PC-3 (cell line): ENCODE measurements at regions of chr3 and their contacts with region 1.

Region 1: GRCh38 chr3:113136071-113136470 is 75.3 kb upstream of the BOC start:
- DNase-seq: peak; percentile 60
- ATAC-seq: peak; percentile 46
- H3K4me3 ChIP-seq: no peak overlapping the region
- H3K27ac ChIP-seq: no peak overlapping the region
- H3K4me1 ChIP-seq: peaks cover 16% of the 10 kb centered on the region; the same call in 1 of the 2 replicates
- H3K27me3 ChIP-seq: no peaks in the 10 kb centered on the region
- CTCF ChIP-seq: peak; percentile 90

Region 2: DNA sequence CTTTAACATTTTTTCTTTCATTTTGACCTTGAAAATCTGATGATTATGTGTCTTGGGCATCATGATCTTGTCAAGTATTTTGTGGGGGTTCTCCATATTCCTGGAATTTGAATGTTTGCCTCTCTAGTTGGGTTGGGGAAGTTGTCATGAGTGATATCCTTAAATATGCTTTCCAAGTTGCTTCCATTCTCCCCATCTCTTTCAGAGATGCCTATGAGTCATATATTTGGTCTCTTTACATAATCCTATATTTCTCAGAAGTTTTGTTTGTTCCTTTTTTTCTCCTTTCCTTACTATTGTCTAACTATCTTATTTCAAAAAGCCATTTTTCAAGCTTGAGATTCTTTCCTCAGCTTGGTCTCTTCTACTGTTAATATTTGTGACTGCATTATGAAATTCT is 426.2 kb before region 1 on chr3:
- CTCF ChIA-PET with region 1: no interaction called
- POLR2A ChIA-PET with region 1: no interaction called
- intact Hi-C with region 1: no loop called
- DNase-seq: peak; percentile 36
- ATAC-seq: peak; percentile 74
- H3K4me3 ChIP-seq: no peak overlapping the region
- H3K27ac ChIP-seq: no peak overlapping the region
- H3K4me1 ChIP-seq: peaks cover 6% of the 10 kb centered on the region; the same call in 1 of the 2 replicates
- H3K27me3 ChIP-seq: no peaks in the 10 kb centered on the region
- CTCF ChIP-seq: no peak

Region 3: DNA sequence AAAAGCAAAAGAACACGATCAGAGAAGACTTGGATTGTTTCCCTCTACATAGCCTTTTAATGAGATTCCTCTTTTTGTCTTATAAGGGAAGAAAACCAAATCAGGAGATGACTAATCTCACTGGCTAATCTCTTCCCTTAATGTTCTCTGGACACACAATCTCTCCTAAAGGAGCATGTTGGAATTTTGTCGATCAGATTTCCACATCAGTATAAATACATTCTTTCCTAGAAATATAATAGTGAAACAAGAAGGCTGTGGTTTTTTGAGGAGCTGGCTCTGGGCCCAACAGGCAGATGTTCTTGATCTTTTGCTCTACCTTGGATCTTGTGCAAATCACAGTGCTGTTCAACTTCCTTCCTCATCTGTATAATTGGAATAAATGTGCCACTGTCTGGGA is 51.3 kb before region 1 on chr3:
- CTCF ChIA-PET with region 1: no interaction called
- POLR2A ChIA-PET with region 1: no interaction called
- intact Hi-C with region 1: no loop called
- DNase-seq: peak; percentile 47
- ATAC-seq: peak; percentile 48
- H3K4me3 ChIP-seq: no peak overlapping the region
- H3K27ac ChIP-seq: no peak overlapping the region
- H3K4me1 ChIP-seq: peaks cover 11% of the 10 kb centered on the region
- H3K27me3 ChIP-seq: no peaks in the 10 kb centered on the region
- CTCF ChIP-seq: no peak

Region 4: GRCh38 chr3:113231827-113232253 is 95.8 kb after region 1 on chr3:
- CTCF ChIA-PET with region 1: interaction called, 3 read pairs
- POLR2A ChIA-PET with region 1: no interaction called
- intact Hi-C with region 1: loop called (anchors 5 kb)
- DNase-seq: peak; percentile 95
- ATAC-seq: peak; percentile 99
- H3K4me3 ChIP-seq: no peak overlapping the region
- H3K27ac ChIP-seq: peak overlapping the region; percentile 93
- H3K4me1 ChIP-seq: peaks cover 26% of the 10 kb centered on the region
- H3K27me3 ChIP-seq: no peaks in the 10 kb centered on the region
- CTCF ChIP-seq: no peak